ENCODE measurements at regions of chr11 and their contacts with region 1.

Region 1: DNA sequence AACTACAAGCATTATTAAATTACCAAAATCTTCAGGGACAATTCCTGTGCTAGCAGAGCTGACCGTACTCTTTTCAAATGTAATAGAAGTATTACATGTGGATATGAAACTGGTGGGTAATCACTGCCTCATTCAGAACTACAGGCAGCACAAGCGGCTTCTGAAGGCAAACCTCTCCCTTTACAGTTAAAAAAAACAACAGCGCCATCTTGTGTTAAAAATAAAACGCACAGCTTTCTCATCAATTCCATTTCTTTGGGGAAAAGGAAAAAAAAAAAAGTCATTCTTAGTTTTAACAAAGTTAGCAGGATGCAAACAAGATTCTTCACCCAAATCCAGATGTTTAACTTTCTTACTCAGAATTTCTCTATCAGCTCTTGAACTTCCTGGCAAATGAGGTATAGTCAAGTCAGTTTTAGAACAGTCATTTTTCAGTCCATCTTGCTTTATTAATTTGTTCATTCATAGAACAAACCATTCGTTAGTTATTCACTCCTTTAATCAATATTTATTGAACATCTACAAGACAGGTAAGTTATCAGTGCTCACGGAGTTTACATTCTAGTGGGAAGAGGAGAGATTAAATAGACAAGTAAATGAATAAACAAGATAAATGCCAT is 331.8 kb upstream of the MPPED2 start:
- DNase-seq: peak in 3 of 7 donors; percentile 13 to 31 (median 26)
- H3K4me3 ChIP-seq: no peak overlapping the region
- H3K27ac ChIP-seq: no peak overlapping the region
- H3K4me1 ChIP-seq: no peaks in the 10 kb centered on the region
- H3K27me3 ChIP-seq: no peaks in the 10 kb centered on the region
- CTCF ChIP-seq: peak; percentile 50 to 76 (median 60)
- POLR2A ChIP-seq: no peak

Region 2: DNA sequence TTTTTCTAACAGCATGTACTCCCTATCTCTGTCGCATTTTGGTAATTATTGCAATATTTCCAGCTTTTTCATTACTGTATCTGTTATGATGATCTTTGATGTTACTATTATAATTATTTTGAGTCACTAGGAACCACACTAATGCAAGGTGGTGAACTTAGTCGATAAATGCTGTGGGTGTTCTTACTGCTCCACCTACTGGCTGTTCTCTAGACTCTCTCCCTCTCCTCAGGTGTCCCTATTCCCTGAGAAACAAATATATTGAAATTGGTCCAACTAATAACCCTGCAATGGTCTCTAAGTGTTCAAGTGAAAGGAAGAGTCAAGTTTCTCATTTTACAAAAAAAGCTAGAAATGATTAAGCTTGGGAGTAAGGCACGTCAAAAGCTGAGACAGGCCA is 584.6 kb before region 1 on chr11:
- intact Hi-C with region 1: loop called in 1 of 2 experiments (anchors 5 kb)
- DNase-seq: no peak
- H3K4me3 ChIP-seq: no peak overlapping the region
- H3K27ac ChIP-seq: no peak overlapping the region
- H3K4me1 ChIP-seq: peaks cover 0 to 7% of the 10 kb centered on the region in 2 donors
- H3K27me3 ChIP-seq: no peaks in the 10 kb centered on the region
- CTCF ChIP-seq: peak; percentile 25 to 49 (median 38)
- POLR2A ChIP-seq: no peak

Region 3: GRCh38 chr11:30358536-30358935 is 559.4 kb before region 1 on chr11:
- intact Hi-C with region 1: loop called in 1 of 2 experiments (anchors 10 kb)
- DNase-seq: no peak
- H3K4me3 ChIP-seq: no peak overlapping the region
- H3K27ac ChIP-seq: no peak overlapping the region
- H3K4me1 ChIP-seq: no peaks in the 10 kb centered on the region
- H3K27me3 ChIP-seq: no peaks in the 10 kb centered on the region
- CTCF ChIP-seq: no peak
- POLR2A ChIP-seq: no peak

Region 4: GRCh38 chr11:31069447-31070205 is 151.7 kb after region 1 on chr11:
- intact Hi-C with region 1: no loop called
- DNase-seq: no peak
- H3K4me3 ChIP-seq: no peak overlapping the region
- H3K27ac ChIP-seq: no peak overlapping the region
- H3K4me1 ChIP-seq: no peaks in the 10 kb centered on the region
- H3K27me3 ChIP-seq: no peaks in the 10 kb centered on the region
- CTCF ChIP-seq: no peak
- POLR2A ChIP-seq: no peak